Breast epithelium (tissue), 4 donors: ENCODE measurements at regions of chr16 and their contacts with region 1.

Region 1: GRCh38 chr16:60170196-60170595 is 1436.1 kb upstream of the GOT2 start:
- DNase-seq: no peak
- H3K4me3 ChIP-seq: no peak overlapping the region
- H3K27ac ChIP-seq: no peak overlapping the region
- H3K4me1 ChIP-seq: no peaks in the 10 kb centered on the region
- H3K27me3 ChIP-seq: no peaks in the 10 kb centered on the region
- CTCF ChIP-seq: no peak
- POLR2A ChIP-seq: no peak

Region 2: GRCh38 chr16:59826767-59827166 is 343.4 kb before region 1 on chr16:
- intact Hi-C with region 1: no loop called
- DNase-seq: no peak
- H3K4me3 ChIP-seq: no peak overlapping the region
- H3K27ac ChIP-seq: no peak overlapping the region
- H3K4me1 ChIP-seq: no peaks in the 10 kb centered on the region
- H3K27me3 ChIP-seq: no peaks in the 10 kb centered on the region
- CTCF ChIP-seq: no peak
- POLR2A ChIP-seq: no peak

Region 3: DNA sequence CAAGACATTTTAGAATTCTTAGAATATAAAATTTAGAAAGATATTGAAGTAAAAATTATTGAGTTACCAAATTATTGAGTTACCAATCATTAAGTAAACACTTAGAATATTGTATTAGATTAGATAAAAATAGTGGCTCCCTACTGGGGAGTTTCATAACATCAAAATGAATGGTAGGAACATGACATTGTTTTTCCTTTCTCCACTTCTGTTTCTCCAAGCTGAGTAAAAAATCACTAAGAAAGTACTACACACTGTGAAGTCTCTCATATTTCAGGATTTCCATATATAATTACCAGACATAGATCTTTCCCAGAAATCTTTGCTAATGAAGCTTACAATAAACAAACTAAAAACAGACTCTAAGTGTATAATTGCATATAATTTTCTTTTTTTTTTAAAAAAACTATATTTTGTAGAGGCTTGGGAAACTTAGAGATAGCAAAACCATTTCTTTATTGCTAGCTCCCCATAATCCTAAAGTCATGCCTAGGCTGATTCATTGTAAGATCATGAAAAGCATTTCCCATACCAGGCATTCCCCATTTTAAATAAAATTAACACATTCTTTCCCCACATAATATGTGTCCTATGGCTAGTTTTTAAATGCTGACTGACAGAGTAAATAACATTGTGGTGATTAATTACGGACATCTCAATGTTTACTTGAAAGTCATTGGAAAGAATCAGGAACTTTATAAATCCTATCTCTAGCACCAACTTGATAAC is 27.4 kb before region 1 on chr16:
- intact Hi-C with region 1: no loop called
- DNase-seq: no peak
- H3K4me3 ChIP-seq: no peak overlapping the region
- H3K27ac ChIP-seq: no peak overlapping the region
- H3K4me1 ChIP-seq: no peaks in the 10 kb centered on the region
- H3K27me3 ChIP-seq: no peaks in the 10 kb centered on the region
- CTCF ChIP-seq: no peak
- POLR2A ChIP-seq: no peak

Region 4: GRCh38 chr16:60642956-60643355 is 472.8 kb after region 1 on chr16:
- intact Hi-C with region 1: loop called (anchors 10 kb)
- DNase-seq: no peak
- H3K4me3 ChIP-seq: no peak overlapping the region
- H3K27ac ChIP-seq: no peak overlapping the region
- H3K4me1 ChIP-seq: no peaks in the 10 kb centered on the region
- H3K27me3 ChIP-seq: no peaks in the 10 kb centered on the region
- CTCF ChIP-seq: no peak
- POLR2A ChIP-seq: no peak